Activated T-helper 1 cell treated with anti-CD3 and anti-CD28 coated beads, Interleukin-12 subunit alpha, Interleukin-12 subunit beta, Interleukin-2, Interleukin-4 antibody, amounts not matched to agents 30 ng/mL and 10 ng/mL and 1 ng/mL, durations not matched to agents 14 hours and 24 hours and 36 hours (primary cell): ENCODE measurements at regions of chr1 and their contacts with region 1.

Region 1: GRCh38 chr1:200888349-200888838 is 6.3 kb upstream of the INAVA start:
- DNase-seq: peak; percentile 52
- H3K4me3 Mint-ChIP-seq: no peak overlapping the region
- H3K27ac Mint-ChIP-seq: no peak overlapping the region
- H3K4me1 Mint-ChIP-seq: peaks cover 36% of the 10 kb centered on the region
- H3K27me3 Mint-ChIP-seq: peaks cover 50% of the 10 kb centered on the region

Region 2: GRCh38 chr1:199948587-199949280 is 939.7 kb before region 1 on chr1:
- intact Hi-C with region 1: loop called (anchors 5 kb)
- DNase-seq: no peak
- H3K4me3 Mint-ChIP-seq: no peak overlapping the region
- H3K27ac Mint-ChIP-seq: no peak overlapping the region
- H3K4me1 Mint-ChIP-seq: no peaks in the 10 kb centered on the region
- H3K27me3 Mint-ChIP-seq: peaks cover 50% of the 10 kb centered on the region

Region 3: GRCh38 chr1:200493344-200493743 is 395.1 kb before region 1 on chr1:
- intact Hi-C with region 1: no loop called
- DNase-seq: no peak
- H3K4me3 Mint-ChIP-seq: no peak overlapping the region
- H3K27ac Mint-ChIP-seq: no peak overlapping the region
- H3K4me1 Mint-ChIP-seq: peaks cover 7% of the 10 kb centered on the region
- H3K27me3 Mint-ChIP-seq: peaks cover 38% of the 10 kb centered on the region

Region 4: GRCh38 chr1:200526709-200527612 is 361.4 kb before region 1 on chr1:
- intact Hi-C with region 1: no loop called
- DNase-seq: no peak
- H3K4me3 Mint-ChIP-seq: no peak overlapping the region
- H3K27ac Mint-ChIP-seq: no peak overlapping the region
- H3K4me1 Mint-ChIP-seq: peaks cover 11% of the 10 kb centered on the region
- H3K27me3 Mint-ChIP-seq: peaks cover 2% of the 10 kb centered on the region

Region 5: DNA sequence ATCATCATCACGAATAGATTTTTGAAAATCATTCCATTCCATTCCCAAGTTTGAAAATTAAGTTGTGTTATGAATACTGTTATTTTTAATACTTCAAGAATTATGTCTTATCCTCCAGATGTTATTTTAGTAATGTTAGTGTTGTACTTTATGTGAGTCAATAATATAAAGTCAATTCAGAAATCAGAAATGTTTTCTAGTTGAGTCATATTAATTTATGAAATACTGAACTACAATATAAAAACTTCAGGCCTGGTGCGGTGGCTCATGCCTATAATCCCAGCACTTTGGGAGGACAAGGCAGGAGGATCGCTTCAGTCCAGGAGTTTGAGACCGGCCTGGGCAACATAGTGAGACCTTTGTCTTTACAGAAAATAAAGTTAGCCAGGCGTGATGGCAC is 54.0 kb before region 1 on chr1:
- intact Hi-C with region 1: no loop called
- DNase-seq: no peak
- H3K4me3 Mint-ChIP-seq: no peak overlapping the region
- H3K27ac Mint-ChIP-seq: no peak overlapping the region
- H3K4me1 Mint-ChIP-seq: no peaks in the 10 kb centered on the region
- H3K27me3 Mint-ChIP-seq: peaks cover 8% of the 10 kb centered on the region

Region 6: DNA sequence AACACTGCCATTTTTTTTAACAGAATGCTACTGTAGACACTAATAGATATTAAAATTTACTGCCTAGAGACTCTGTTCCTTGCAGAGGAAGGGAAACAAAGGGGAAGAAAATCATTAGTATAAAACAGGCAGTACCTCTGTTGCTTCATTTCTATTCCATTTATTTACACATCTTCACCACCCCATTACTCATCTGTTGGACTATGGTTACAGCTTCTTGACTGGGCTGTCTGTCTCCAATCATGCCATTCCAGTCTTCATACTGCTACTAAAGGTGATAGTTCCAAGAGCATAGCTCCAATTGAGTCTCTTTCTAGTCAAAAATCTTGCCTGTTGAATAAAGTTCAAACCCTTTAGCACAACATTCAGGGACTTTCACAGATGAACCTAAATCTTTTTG is 37.8 kb before region 1 on chr1:
- intact Hi-C with region 1: no loop called
- DNase-seq: no peak
- H3K4me3 Mint-ChIP-seq: no peak overlapping the region
- H3K27ac Mint-ChIP-seq: no peak overlapping the region
- H3K4me1 Mint-ChIP-seq: no peaks in the 10 kb centered on the region
- H3K27me3 Mint-ChIP-seq: peaks cover 9% of the 10 kb centered on the region

Region 7: DNA sequence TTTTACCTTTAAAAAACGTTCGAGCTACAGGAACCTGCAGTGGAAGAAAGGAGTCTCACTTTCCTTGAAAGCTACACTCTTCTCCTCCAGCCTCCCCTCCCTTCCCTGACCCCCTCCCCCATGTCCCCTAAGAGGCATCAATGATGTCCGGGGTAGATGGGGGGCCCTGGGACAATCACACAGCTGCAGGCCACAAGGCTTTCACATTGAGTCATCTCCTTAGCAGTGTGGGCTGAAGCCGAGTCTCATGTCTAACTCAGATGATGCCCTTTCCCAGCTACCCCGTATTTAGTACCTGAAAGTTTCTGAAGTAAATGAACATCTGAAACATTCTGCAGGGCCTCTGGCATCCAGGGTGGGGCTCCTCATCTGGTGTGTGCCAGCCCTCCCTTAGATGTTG is 21.9 kb before region 1 on chr1:
- intact Hi-C with region 1: loop called (anchors 1 kb)
- DNase-seq: no peak
- H3K4me3 Mint-ChIP-seq: no peak overlapping the region
- H3K27ac Mint-ChIP-seq: no peak overlapping the region
- H3K4me1 Mint-ChIP-seq: peaks cover 41% of the 10 kb centered on the region
- H3K27me3 Mint-ChIP-seq: peaks cover 37% of the 10 kb centered on the region

Region 8: GRCh38 chr1:200877839-200878551 is 10.4 kb before region 1 on chr1:
- intact Hi-C with region 1: loop called (anchors 1 kb)
- DNase-seq: no peak
- H3K4me3 Mint-ChIP-seq: no peak overlapping the region
- H3K27ac Mint-ChIP-seq: no peak overlapping the region
- H3K4me1 Mint-ChIP-seq: peaks cover 8% of the 10 kb centered on the region
- H3K27me3 Mint-ChIP-seq: peaks cover 52% of the 10 kb centered on the region

Region 9: DNA sequence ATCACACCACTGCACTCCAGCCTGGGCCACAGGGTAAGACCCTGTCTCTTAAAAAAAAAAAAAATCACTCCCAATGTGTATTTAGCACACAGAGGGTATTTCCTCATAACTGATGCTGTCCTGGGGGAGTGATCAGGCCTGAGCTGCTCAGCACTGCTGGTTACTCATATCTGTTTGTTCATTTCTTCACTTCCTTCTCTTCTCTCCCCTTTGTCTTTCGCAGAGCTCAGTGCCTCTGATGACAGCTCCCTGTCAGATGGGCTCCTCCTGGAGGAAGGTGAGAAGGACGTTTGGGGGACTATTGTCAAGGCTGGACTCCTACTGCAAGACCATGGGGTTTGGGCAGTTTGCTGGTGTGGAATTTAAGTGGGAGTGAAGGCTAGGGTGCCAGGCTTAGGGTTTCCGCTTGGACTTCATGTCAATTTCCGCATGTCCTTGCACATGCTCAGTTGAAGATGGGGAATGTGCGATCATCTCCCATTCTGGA is 19.3 kb after region 1 on chr1:
- intact Hi-C with region 1: loop called (anchors 1 kb)
- DNase-seq: no peak
- H3K4me3 Mint-ChIP-seq: no peak overlapping the region
- H3K27ac Mint-ChIP-seq: no peak overlapping the region
- H3K4me1 Mint-ChIP-seq: peaks cover 10% of the 10 kb centered on the region
- H3K27me3 Mint-ChIP-seq: peaks cover 29% of the 10 kb centered on the region

Region 10: GRCh38 chr1:200925831-200926230 is 37.4 kb after region 1 on chr1:
- intact Hi-C with region 1: loop called (anchors 1 kb)
- DNase-seq: no peak
- H3K4me3 Mint-ChIP-seq: no peak overlapping the region
- H3K27ac Mint-ChIP-seq: no peak overlapping the region
- H3K4me1 Mint-ChIP-seq: no peaks in the 10 kb centered on the region
- H3K27me3 Mint-ChIP-seq: peaks cover 23% of the 10 kb centered on the region